ENCODE measurements at regions of chr19 and their contacts with region 1.

Region 1: GRCh38 chr19:42244347-42245220 is 2.2 kb upstream of the GSK3A start:
- DNase-seq: peak; percentile 82 to 92
- H3K4me3 ChIP-seq: peak overlapping the region; percentile 48 to 86 (median 76)
- H3K27ac ChIP-seq: no peak overlapping the region; the same call in 1 of the 2 replicates
- H3K4me1 ChIP-seq: peaks cover 2 to 14% (median 4%) of the 10 kb centered on the region in 4 experiments
- H3K27me3 ChIP-seq: no peaks in the 10 kb centered on the region; a peak in 1 of 7 replicates
- CTCF ChIP-seq: peak; percentile 48 to 82 (median 73)
- EP300 ChIP-seq: no peak
- POLR2A ChIP-seq: no peak
- RAD21 ChIP-seq: peak; percentile 20 to 44; a peak in 2 of 4 replicates

Region 2: DNA sequence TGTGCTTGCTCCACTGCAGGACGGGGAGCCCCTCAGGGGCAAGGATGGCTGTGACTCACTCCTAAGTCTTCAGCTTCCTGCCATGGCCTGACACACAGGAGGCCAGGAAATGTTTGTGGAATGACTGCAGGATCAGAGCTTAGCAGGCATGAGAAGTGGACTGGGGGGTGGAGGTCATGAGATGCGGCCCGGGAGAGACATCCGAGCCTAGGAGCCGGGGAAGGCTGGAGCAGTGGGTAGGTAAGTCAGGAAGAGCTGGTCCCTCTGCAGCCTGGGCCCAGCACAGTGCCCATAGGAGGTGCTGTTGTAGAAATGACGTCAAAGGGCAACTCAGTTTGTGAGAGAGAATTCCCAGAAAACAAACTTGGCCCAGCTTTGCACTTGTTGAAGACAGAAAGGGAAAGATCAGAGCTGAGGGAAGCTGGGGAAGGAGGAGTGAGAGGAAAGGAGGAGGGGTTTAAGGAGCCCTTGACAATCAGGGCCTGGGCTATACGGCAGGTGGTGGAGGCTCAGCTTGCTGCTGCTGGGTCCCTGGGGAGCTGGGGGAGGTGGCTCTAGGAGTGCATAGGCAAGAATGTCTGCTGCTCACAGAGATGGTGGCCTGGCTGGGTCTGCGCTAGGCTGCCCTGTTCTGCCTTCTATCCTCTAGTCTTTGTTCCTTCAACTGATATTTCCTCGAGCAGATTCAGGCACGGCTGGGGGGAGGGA is 130.8 kb before region 1 on chr19:
- CTCF ChIA-PET with region 1: interaction called, 15 read pairs
- POLR2A ChIA-PET with region 1: interaction called, 3 read pairs
- DNase-seq: peak in 1 of 2 experiments; percentile 56
- H3K4me3 ChIP-seq: no peak overlapping the region
- H3K27ac ChIP-seq: no peak overlapping the region
- H3K4me1 ChIP-seq: peaks cover 8 to 17% (median 10%) of the 10 kb centered on the region in 4 experiments
- H3K27me3 ChIP-seq: no peaks in the 10 kb centered on the region
- CTCF ChIP-seq: peak; percentile 26 to 64 (median 62); a peak in 3 of 4 replicates
- EP300 ChIP-seq: no peak
- POLR2A ChIP-seq: no peak
- RAD21 ChIP-seq: 0 out of 4 replicates have a peak, but pooled peaks of 1 of the 2 experiments have one; percentile 11

Region 3: DNA sequence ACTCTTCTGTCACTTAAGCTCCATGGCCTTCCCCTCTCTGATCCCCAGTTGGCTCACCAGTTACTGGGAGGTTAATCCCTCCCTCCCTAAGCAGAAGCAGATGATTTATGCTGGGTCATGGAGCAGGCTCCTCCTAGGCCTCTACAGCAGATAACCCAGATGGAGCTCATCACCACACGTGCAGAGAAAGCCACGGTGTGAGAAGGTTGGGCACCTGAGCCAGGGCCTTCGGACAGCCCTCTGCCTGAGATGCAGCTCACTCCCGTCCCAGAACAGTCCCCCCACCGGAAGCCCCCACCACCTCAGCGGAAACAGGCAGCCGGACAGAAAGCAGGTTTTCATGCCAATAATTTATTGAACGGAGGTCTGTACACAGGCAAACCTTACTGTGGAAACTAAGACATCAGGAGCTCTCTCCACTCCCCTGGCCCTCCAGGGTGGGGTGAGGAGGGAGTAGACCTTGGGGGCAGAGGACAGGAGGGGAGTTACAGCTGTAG is 14.7 kb before region 1 on chr19:
- CTCF ChIA-PET with region 1: interaction called, 6 read pairs
- POLR2A ChIA-PET with region 1: interaction called, 23 read pairs
- DNase-seq: no peak
- H3K4me3 ChIP-seq: no peak overlapping the region
- H3K27ac ChIP-seq: no peak overlapping the region
- H3K4me1 ChIP-seq: no peaks in the 10 kb centered on the region
- H3K27me3 ChIP-seq: no peaks in the 10 kb centered on the region
- CTCF ChIP-seq: no peak
- EP300 ChIP-seq: no peak
- POLR2A ChIP-seq: no peak
- RAD21 ChIP-seq: no peak

Region 4: DNA sequence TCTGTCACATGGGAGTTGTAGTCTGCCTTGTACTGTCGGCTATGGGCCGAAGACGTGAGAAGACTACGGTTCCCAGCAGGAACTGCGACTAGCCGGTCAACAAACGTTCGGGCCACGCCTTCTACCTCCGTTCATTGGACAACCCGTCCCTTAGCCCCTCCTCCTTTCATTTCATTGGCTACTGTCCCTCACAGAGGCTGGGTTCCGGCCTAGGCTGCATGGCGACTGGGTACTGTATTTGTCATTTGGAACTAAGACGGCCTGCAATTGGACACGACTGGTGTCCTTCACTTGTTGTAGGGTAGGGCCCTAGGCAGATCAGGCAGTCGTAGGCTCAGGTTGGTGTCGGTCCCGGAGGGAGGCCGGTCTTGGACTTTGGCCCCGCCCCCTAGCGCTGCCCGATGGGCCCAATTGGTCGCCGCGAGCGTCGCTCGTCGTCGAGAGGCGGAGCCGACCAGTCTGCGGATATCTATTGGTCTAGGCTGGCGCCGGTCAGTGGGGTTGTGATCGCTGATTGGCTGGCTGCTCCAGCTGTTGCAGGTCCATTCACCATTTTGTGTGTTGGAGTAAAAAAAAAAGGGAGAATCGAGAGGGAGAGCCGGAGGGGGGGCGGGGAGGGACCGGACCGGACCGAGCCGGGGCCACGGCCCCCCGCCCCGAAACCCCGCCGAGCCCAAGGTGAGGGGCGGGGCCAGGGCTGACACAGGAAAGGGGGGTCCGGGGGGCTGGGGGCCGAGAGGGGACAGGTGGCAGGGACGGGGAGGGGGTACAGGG is 24.3 kb after region 1 on chr19 and contains the start of gene CIC:
- CTCF ChIA-PET with region 1: interaction called, 24 read pairs
- POLR2A ChIA-PET with region 1: interaction called, 6 read pairs
- DNase-seq: peak; percentile 99 to 100
- H3K4me3 ChIP-seq: peak within 1 kb of the TSS; percentile 75 to 99 (median 86)
- H3K27ac ChIP-seq: peak within 1 kb of the TSS; percentile 100
- H3K4me1 ChIP-seq: peaks cover 2 to 21% (median 10%) of the 10 kb centered on the region in 4 experiments
- H3K27me3 ChIP-seq: no peaks in the 10 kb centered on the region
- CTCF ChIP-seq: no peak
- EP300 ChIP-seq: no peak
- POLR2A ChIP-seq: no peak
- RAD21 ChIP-seq: no peak
- total RNA-seq, gene CIC: 43.6 and 48.4 TPM in 2 replicates

Region 5: GRCh38 chr19:42283143-42284065 is 38.8 kb after region 1 on chr19:
- CTCF ChIA-PET with region 1: interaction called, 260 read pairs
- POLR2A ChIA-PET with region 1: interaction called, 68 read pairs
- DNase-seq: peak in 1 of 2 experiments; percentile 91
- H3K4me3 ChIP-seq: peak overlapping the region; percentile 42 to 57 (median 52)
- H3K27ac ChIP-seq: no peak overlapping the region
- H3K4me1 ChIP-seq: peaks cover 9 to 42% (median 29%) of the 10 kb centered on the region in 4 experiments
- H3K27me3 ChIP-seq: no peaks in the 10 kb centered on the region
- CTCF ChIP-seq: no peak
- EP300 ChIP-seq: no peak
- POLR2A ChIP-seq: no peak
- RAD21 ChIP-seq: no peak

Region 6: GRCh38 chr19:42335971-42336370 is 91.4 kb after region 1 on chr19:
- CTCF ChIA-PET with region 1: no interaction called
- POLR2A ChIA-PET with region 1: no interaction called
- DNase-seq: no peak
- H3K4me3 ChIP-seq: no peak overlapping the region
- H3K27ac ChIP-seq: no peak overlapping the region
- H3K4me1 ChIP-seq: no peaks in the 10 kb centered on the region; a peak in 1 of 7 replicates
- H3K27me3 ChIP-seq: no peaks in the 10 kb centered on the region
- CTCF ChIP-seq: no peak
- EP300 ChIP-seq: no peak
- POLR2A ChIP-seq: no peak
- RAD21 ChIP-seq: no peak

Region 7: DNA sequence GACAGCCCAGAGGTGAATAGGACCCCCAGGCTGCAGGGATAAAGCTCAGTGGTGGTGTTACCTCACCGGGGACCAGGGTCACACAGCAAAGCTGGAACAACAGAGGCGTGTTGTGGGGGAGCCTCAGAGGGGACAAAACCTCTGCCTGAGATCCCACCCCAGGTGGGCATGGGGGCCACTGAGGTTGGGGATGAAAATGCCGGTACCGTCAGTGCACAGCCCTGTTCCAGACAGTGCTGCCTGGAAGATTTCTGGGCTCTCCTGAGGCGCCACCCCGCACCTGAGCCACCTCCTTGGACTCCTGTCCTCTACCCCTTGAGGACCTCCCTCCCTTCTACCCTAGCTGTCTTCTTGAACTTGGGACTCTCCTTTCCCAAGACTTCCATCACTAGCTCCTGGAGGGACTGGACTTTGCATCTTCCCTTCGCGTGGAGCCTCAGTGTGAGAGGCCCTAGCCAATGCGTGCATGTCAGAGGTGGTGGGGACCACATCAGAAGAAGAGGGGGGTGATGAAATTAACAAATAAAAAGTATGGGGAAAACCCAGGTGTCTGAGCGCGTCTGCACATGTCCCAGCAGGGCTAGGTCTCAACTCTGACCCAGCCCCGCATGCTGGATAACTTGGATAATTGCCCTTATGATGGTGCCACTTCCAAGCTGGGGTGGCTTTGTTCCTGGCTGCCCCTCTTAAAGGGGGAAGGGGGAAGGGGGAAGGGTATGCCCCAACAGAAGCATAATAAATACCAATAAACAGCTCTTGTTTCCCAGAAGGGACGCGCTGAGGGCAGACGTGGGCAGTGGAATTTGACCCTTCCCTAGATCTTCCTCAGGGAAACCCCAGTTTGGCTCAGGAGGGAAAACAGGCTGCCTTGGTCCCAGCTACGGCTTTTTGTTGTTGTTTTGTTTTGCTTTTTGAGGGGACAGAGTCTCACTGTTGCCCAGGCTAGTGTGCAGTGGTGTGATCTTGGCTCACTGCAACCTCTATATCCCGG is 133.9 kb after region 1 on chr19:
- CTCF ChIA-PET with region 1: no interaction called
- POLR2A ChIA-PET with region 1: no interaction called
- DNase-seq: no peak
- H3K4me3 ChIP-seq: no peak overlapping the region
- H3K27ac ChIP-seq: no peak overlapping the region; the same call in 1 of the 2 replicates
- H3K4me1 ChIP-seq: peaks cover 0 to 3% (median 1%) of the 10 kb centered on the region in 4 experiments; a peak in 4 of 7 replicates
- H3K27me3 ChIP-seq: no peaks in the 10 kb centered on the region; a peak in 1 of 7 replicates
- CTCF ChIP-seq: no peak
- EP300 ChIP-seq: no peak
- POLR2A ChIP-seq: no peak
- RAD21 ChIP-seq: no peak